Gastrocnemius medialis (tissue), 4 donors: ENCODE measurements at regions of chr3 and their contacts with region 1.

Region 1: DNA sequence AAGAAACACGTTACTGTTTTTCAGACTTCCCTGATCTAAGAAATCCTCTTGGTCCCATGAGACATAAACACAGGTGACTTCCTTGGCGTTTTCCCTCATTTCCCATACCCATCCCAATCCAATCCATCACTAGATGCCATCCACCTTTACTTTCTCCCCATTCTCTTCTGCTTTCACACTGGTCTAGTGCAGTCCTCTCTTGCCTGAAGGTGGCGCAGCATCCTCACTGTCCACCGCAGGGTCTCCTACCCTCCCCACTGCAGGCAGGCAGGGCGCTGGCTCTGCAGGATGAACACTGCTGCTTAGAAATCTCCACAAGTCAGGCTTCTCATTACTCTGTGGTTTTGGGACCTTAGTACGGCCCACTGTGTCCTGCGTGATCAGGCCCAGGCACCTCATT is 58.2 kb downstream of the RAB7A start:
- DNase-seq: peak; percentile 43 to 63
- ATAC-seq: peak; percentile 36 to 63
- H3K4me3 ChIP-seq: no peak overlapping the region
- H3K27ac ChIP-seq: peak overlapping the region; percentile 80 to 99 (median 96)
- H3K4me1 ChIP-seq: peaks cover 94 to 96% of the 10 kb centered on the region in 2 donors
- H3K27me3 ChIP-seq: no peaks in the 10 kb centered on the region
- CTCF ChIP-seq: peak in 3 of 5 experiments; percentile 47 to 58 (median 48)
- POLR2A ChIP-seq: no peak

Region 2: DNA sequence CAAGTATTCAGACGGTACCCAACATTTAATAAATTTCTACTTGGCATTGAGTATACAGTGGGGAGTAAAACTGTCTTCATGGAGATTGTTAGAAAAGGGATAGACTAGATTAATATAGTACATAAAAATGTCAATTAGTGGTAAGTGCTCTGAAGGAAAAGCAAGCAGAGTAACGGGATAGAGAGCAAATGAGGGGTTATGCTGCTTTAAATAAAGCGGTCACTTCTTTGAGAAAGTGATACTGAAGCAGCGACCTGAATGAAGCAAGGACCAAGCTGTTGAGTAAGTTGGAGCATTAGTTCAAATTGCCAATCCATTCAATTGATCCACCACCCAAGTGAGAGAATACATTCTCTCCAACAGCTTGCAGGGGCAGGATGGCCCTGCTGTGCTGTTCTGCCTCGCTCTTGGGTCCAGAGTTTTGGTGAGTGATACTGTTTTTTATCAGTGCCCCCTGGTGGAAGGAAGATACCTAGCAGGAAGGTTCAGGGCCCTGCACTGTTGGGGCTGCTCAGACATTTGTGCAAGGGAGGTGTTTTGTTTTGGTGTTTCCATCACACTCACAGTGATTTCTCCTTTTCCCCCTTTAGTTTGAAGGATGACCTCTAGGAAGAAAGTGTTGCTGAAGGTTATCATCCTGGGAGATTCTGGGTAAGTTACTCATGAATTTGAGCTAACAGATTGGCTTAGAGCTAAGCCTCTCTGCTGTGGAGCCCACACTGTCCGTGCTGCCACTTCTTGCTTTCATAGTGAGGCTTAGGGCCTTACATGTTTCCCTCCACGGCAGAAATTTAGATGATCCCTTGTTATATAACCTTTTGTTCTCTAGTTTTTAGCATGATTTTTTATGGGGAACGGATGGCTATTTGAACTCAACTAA is 10.8 kb after region 1 on chr3:
- in situ Hi-C with region 1: no loop called
- intact Hi-C with region 1: loop called (anchors 1 kb)
- DNase-seq: peak; percentile 51 to 67
- ATAC-seq: peak; percentile 57 to 68
- H3K4me3 ChIP-seq: no peak overlapping the region
- H3K27ac ChIP-seq: peak overlapping the region; percentile 94 to 99 (median 96)
- H3K4me1 ChIP-seq: peaks cover 41 to 66% of the 10 kb centered on the region in 2 donors
- H3K27me3 ChIP-seq: no peaks in the 10 kb centered on the region
- CTCF ChIP-seq: peak; percentile 75 to 89 (median 85)
- POLR2A ChIP-seq: no peak

Region 3: GRCh38 chr3:128845778-128846485 is 61.7 kb after region 1 on chr3:
- in situ Hi-C with region 1: no loop called
- intact Hi-C with region 1: loop called (anchors 1 kb)
- DNase-seq: peak; percentile 67 to 86
- ATAC-seq: peak; percentile 67 to 87
- H3K4me3 ChIP-seq: peak overlapping the region; percentile 46 to 70 (median 52)
- H3K27ac ChIP-seq: peak overlapping the region; percentile 78 to 90 (median 84)
- H3K4me1 ChIP-seq: peaks cover 7 to 12% of the 10 kb centered on the region in 2 donors
- H3K27me3 ChIP-seq: no peaks in the 10 kb centered on the region
- CTCF ChIP-seq: peak; percentile 60 to 90 (median 86)
- POLR2A ChIP-seq: no peak